Endothelial cell of umbilical vein (primary cell): ENCODE measurements at regions of chr7 and their contacts with region 1.

Region 1: DNA sequence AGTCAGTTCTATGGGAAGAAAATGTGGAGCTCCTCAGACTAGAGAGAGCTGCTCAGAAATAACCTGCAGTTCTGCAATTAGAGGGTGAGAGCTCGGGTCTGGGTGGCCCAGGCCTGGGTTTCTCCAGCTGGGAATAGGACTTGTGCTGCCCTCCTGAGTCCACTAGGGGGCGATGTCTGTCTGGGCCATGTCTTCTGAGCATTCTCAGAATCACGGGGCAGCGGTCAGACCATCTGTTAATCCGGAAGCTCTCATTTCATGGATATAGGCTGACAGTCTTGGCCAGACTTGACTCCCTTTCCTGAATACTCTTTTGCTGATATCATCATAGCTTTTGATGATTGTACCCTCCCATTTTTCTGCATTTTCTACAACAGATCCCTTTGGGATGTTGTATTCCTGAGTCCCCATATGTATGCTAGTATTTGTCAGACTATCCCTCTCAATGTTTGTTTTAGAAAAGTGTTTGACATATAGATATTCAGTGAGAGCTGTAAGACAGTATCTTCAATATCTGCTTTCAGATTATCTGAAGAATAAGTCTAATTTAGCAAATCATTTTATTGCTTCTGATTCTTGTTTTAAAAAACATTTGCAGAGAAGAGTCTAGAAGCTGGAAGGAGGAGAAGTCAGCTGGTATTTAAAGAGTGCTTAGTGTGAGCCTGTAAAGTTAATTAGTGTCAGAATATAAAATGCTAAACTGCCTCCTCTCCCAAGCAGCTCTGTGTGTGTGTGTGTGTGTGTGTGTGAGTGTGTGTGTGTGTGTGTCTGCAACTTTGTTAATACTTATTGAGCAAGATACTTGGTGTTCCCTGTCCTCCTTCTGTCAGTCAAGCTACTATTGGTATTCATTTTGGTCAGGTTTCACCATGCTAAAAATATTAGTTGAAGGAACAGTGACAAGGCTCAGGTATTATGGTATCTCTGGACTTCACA is 38.0 kb downstream of the STARD3NL start:
- DNase-seq: peak; percentile 88
- H3K4me3 ChIP-seq: no peak overlapping the region
- H3K27ac ChIP-seq: peak overlapping the region; percentile 43
- H3K4me1 ChIP-seq: peaks cover 13% of the 10 kb centered on the region
- H3K27me3 ChIP-seq: no peaks in the 10 kb centered on the region
- CTCF ChIP-seq: peak; percentile 98 to 99
- POLR2A ChIP-seq: no peak

Region 2: DNA sequence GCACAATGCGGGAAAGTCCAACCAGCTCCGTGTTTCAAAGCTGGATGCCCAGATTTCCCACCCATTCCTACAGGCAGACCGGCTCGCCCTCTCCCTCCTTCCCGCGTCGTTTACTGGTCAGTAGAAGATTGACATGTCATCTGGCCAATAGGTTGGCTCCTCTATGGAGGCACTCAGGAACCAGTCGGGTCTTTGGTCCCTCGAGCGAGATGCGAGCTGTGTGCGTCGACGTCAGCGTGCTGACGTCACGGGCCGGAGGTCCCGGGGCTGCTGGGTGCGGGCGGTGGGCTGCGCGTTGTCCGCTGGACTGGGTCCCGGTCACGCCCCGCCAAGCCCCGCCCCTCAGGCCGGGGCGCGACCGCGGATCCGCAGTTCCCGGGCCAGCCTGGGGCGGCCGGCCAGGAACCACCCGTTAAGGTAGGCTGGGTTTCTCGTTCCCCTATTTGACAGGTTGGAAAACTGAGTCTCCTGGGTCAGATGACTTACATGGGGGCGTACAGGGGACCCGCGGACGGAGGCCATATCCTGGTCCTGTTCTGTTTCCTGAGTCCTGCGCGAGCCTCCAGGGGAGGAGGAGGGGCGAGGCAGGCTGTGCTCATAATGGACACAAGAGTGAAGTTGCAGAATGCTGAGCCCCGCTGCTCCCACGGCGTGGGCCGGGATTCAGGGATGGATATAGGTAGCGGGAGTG is 37.9 kb before region 1 on chr7 and contains the start of gene STARD3NL:
- CTCF ChIA-PET with region 1: interaction called, 62 read pairs
- POLR2A ChIA-PET with region 1: interaction called, 4 read pairs
- dilution Hi-C with region 1: no loop called
- intact Hi-C with region 1: loop called (anchors 1 kb)
- DNase-seq: peak; percentile 100
- H3K4me3 ChIP-seq: peak within 1 kb of the TSS; percentile 78 to 88 (median 85)
- H3K27ac ChIP-seq: peak within 1 kb of the TSS; percentile 88
- H3K4me1 ChIP-seq: peaks cover 34% of the 10 kb centered on the region
- H3K27me3 ChIP-seq: peaks cover 2 to 16% of the 10 kb centered on the region in 2 experiments
- CTCF ChIP-seq: no peak
- POLR2A ChIP-seq: peak; percentile 71
- total RNA-seq, gene STARD3NL: 68.9 and 73.6 TPM in 2 replicates

Region 3: GRCh38 chr7:38195804-38196595 is 20.0 kb before region 1 on chr7:
- CTCF ChIA-PET with region 1: interaction called, 123 read pairs
- POLR2A ChIA-PET with region 1: interaction called, 10 read pairs
- dilution Hi-C with region 1: no loop called
- intact Hi-C with region 1: loop called (anchors 1 kb)
- DNase-seq: peak; percentile 76
- H3K4me3 ChIP-seq: peak overlapping the region in 2 of 3 experiments; percentile 12 to 22
- H3K27ac ChIP-seq: peak overlapping the region; percentile 81
- H3K4me1 ChIP-seq: peaks cover 30% of the 10 kb centered on the region
- H3K27me3 ChIP-seq: no peaks in the 10 kb centered on the region
- CTCF ChIP-seq: no peak
- POLR2A ChIP-seq: no peak

Region 4: GRCh38 chr7:38311329-38311937 is 95.4 kb after region 1 on chr7:
- CTCF ChIA-PET with region 1: interaction called, 10 read pairs
- POLR2A ChIA-PET with region 1: no interaction called
- dilution Hi-C with region 1: no loop called
- intact Hi-C with region 1: no loop called
- DNase-seq: no peak
- H3K4me3 ChIP-seq: peak overlapping the region; percentile 40 to 58 (median 44)
- H3K27ac ChIP-seq: no peak overlapping the region
- H3K4me1 ChIP-seq: peaks cover 13% of the 10 kb centered on the region
- H3K27me3 ChIP-seq: no peaks in the 10 kb centered on the region
- CTCF ChIP-seq: no peak
- POLR2A ChIP-seq: no peak

Region 5: DNA sequence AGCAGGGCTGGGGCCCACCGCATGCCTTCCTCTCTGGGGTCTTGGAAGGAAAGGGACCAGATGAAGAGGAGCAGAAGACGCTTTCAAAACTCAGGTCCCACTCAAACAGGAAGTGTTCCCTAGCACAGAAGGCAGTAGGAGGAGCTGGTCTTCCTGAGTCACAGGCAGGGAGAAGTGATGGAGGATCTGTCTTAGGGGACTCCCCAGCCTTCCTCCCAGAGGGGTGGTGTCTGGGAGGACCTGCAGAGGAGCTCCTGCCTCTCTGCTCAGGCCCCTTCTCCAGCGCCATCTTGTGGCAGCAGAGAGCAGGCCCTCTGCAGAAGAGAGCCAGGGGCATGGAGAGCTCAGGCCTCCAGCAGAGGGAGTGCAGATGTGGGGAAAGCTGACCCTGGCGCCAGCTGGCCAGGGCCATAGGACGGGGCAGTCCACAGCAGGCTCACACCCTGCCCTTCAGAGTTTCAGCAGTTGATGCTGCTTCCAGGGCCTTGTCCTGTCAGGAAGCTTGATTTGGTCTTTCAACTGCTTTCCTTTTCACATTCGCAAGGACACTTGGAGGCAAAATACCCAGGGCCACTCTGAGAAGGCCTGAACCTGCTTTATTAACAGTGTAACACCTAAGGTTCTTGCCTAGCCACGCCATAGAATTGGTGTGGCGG is 119.6 kb after region 1 on chr7:
- CTCF ChIA-PET with region 1: interaction called, 40 read pairs
- POLR2A ChIA-PET with region 1: no interaction called
- dilution Hi-C with region 1: no loop called
- intact Hi-C with region 1: loop called (anchors 1 kb)
- DNase-seq: peak; percentile 82
- H3K4me3 ChIP-seq: no peak overlapping the region
- H3K27ac ChIP-seq: no peak overlapping the region
- H3K4me1 ChIP-seq: no peaks in the 10 kb centered on the region
- H3K27me3 ChIP-seq: no peaks in the 10 kb centered on the region
- CTCF ChIP-seq: peak; percentile 98 to 100
- POLR2A ChIP-seq: no peak